ENCODE measurements at regions of chr22 and their contacts with region 1.

Region 1: DNA sequence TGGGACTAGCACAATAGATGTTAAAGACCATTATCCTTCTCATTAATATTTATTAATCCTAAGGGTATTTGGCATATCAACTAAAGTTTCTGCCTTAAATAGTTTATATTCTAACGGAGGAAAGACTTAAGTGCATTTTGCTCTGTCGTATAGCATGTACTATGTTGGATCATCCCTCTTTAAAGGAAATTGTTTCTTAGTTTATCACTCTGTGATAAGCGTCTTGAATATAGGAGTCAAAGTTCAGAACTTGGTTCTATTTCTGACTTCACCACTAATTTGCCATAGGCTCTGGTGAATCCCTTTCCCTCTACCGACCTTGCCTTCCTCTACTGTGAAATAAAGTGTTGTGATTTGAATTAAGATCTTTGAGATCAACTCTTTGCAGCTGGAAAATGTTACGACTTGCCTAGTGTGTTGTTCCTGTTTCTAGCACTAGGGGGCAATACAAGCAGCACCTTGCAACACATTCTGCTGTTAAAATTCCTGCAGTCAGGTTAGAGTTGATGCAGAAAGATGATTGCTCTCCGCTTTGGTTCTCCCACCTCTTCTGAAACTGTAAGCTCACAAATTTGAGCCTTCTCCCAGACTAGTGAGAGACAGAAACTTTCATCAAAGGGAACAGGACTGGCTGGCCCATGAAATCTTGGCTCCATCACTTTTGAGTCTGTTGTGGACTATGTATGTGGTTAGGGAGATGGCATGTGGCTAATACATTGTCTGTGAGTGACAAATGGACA is 27.8 kb upstream of the ZNRF3 start:
- DNase-seq: no peak
- ATAC-seq: peak; percentile 69 to 83 (median 80)
- H3K4me3 ChIP-seq: no peak overlapping the region
- H3K27ac ChIP-seq: no peak overlapping the region
- H3K4me1 ChIP-seq: peaks cover 15% of the 10 kb centered on the region
- H3K27me3 ChIP-seq: no peaks in the 10 kb centered on the region
- CTCF ChIP-seq: peak; percentile 93

Region 2: GRCh38 chr22:28791841-28792490 is 63.6 kb before region 1 on chr22:
- intact Hi-C with region 1: no loop called
- DNase-seq: no peak
- ATAC-seq: peak in 3 of 4 donors; percentile 5 to 37 (median 30)
- H3K4me3 ChIP-seq: no peak overlapping the region
- H3K27ac ChIP-seq: no peak overlapping the region
- H3K4me1 ChIP-seq: peaks cover 18% of the 10 kb centered on the region
- H3K27me3 ChIP-seq: no peaks in the 10 kb centered on the region
- CTCF ChIP-seq: no peak

Region 3: GRCh38 chr22:28801845-28802594 is 53.5 kb before region 1 on chr22:
- intact Hi-C with region 1: no loop called
- DNase-seq: no peak
- ATAC-seq: no peak
- H3K4me3 ChIP-seq: peak overlapping the region; percentile 82
- H3K27ac ChIP-seq: peak overlapping the region; percentile 100
- H3K4me1 ChIP-seq: peaks cover 23% of the 10 kb centered on the region
- H3K27me3 ChIP-seq: no peaks in the 10 kb centered on the region
- CTCF ChIP-seq: no peak

Region 4: DNA sequence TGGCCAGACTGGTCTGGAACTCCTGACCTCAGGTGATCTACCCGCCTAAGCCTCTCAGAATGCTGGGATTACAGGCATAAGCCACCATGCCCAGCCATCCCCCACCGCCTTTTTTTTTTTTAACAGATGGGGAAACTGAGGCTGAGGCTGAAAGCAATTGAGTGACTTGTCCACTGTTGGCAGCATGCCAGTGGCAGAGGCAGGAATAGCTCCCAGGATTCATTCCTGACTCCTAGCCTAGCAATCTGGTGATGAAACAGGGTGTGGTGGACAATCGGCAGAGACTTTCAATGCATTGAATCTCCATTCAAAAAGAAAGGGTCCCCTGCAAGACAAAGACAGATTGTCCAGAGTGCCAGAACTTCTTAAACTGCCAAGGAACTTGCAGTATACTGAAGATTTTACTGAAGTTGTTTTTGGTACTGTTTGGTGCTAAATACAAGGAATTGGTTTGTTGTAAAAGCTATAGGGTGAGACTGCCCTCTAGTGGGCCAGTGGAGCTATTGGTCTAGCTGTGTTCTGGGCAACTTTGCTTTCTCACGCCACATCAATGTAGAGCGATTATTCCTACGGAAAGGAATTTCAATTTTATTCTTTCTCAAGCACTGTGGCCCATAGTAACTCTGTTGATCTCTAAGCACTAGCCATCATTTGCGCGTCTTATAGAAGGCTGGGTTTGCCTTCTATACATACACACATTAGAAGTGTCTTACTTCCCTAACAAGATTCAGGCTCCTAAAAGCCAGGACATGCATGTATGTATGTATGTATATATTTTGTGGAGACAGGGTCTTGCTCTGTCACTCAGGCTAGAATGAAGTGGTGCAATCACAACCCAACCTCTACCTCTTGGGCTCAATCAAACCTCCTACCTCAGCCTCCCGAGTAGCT is 185.1 kb after region 1 on chr22:
- intact Hi-C with region 1: loop called (anchors 1 to 2 kb)
- DNase-seq: peak in 1 of 2 donors; percentile 68
- ATAC-seq: peak; percentile 71 to 84 (median 79)
- H3K4me3 ChIP-seq: no peak overlapping the region
- H3K27ac ChIP-seq: no peak overlapping the region
- H3K4me1 ChIP-seq: peaks cover 11% of the 10 kb centered on the region
- H3K27me3 ChIP-seq: no peaks in the 10 kb centered on the region
- CTCF ChIP-seq: peak; percentile 98